Dorsolateral prefrontal cortex (tissue), 120 donors: ENCODE measurements at regions of chr4 and their contacts with region 1.

Region 1: DNA sequence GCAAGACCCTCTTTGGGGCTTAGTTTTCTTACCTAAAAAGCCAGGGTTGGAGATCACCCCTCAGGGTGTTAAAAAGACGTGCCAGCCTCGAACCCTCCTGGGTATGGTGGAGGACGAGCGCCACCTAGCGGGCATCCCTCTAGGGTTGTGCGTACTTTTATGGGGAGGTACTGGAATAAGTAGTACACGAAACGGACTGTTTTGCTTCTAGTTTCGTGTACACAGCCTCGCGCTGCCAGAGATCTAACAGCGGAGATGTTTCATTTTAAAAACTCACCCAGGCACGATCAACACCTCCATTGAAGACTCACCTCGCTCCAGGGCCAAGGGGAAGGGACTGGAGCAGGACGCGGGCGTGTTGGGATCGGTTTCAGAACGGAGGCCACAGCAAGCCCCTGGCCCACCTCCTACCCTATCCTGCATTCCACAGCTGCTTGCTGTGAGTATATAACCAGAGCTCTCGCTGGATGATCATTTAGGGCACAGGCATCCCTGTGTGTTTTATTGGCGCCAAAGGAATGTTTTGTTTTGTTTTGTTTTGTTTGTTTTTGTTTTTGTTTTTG is 4.8 kb upstream of the NKX3-2 start:
- DNase-seq: peak in 7 of 10 donors; percentile 44 to 80 (median 71)
- H3K4me3 ChIP-seq: peak overlapping the region in 36 of 59 donors; percentile 1 to 57 (median 34)
- H3K27ac ChIP-seq: no peak overlapping the region
- H3K27me3 ChIP-seq: peaks cover 22 to 84% (median 67%) of the 10 kb centered on the region in 45 donors
- CTCF ChIP-seq: peak; percentile 58 to 96 (median 85)

Region 2: DNA sequence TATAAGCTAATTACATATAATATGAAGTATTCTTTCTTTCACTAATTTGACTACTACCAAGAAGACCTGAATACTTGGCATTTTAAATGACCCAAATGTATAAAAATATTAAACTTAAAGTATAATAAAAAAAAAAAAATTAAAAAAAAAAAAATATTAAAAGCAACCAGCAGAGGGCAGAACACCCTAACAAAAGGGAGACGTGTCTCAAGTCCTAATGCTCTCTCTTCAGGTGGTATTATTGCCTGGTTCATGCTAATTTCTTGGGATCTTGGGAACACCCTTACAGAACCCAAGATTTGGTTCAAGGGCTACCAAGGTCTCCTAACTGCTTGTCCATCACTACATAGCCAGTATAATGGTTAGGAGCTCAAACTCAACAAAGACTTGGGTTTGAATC is 819.7 kb before region 1 on chr4:
- intact Hi-C with region 1: loop called (anchors 2 to 10 kb)
- DNase-seq: no peak
- H3K4me3 ChIP-seq: no peak overlapping the region
- H3K27ac ChIP-seq: no peak overlapping the region
- H3K27me3 ChIP-seq: peaks cover 0 to 17% (median 0%) of the 10 kb centered on the region in 45 donors
- CTCF ChIP-seq: peak in 55 of 56 donors; percentile 34 to 78 (median 54)

Region 3: DNA sequence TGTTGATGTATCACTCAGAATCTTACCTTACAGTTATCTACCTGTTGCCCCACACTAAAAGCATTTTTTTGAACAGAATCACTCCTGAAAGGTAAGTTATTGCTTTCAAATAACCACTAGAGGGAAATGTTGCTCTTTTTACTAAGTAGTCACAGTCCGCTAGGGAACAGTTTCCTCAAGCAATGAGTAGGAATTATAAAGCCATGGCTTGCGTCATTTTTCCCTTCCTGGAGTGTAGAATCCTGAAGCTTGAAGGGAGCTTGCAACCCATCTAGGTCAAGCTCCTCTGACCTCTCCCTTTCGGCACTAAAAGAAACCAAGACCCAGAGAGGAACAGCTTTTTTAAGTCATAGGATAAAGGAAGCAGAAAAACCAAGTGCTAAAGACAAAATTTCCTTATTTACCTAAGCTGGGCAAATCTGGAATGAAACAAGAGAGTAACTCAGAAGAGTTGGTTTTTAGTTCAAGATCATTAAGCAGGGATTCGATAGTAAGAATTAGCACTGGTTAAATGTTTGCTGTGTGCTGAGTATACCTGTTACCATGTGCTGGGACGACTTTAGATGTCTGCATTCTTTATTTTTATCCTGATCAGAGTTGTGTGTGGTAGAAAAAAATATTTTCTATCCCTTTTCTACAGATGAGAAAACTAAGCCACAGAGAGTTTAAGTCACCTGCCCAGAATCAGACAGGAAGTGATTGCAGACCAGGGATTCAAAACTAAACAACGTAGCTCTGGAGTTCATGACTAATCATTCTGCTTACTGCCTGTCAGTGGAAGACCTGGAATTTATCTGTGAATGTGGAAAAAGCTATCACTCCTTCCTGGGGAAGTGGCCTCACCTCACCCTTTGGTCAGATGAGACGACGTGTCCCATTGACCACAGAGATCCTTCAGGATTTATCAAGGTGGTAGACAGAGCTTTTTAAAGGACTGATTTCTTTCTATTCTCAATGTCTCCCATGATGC is 696.4 kb before region 1 on chr4:
- intact Hi-C with region 1: loop called (anchors 2 to 5 kb)
- DNase-seq: no peak
- H3K4me3 ChIP-seq: no peak overlapping the region
- H3K27ac ChIP-seq: no peak overlapping the region
- H3K27me3 ChIP-seq: peaks cover 0 to 51% (median 5%) of the 10 kb centered on the region in 45 donors
- CTCF ChIP-seq: peak; percentile 34 to 88 (median 68)

Region 4: GRCh38 chr4:13298655-13299054 is 250.4 kb before region 1 on chr4:
- intact Hi-C with region 1: no loop called
- DNase-seq: no peak
- H3K4me3 ChIP-seq: no peak overlapping the region
- H3K27ac ChIP-seq: no peak overlapping the region
- H3K27me3 ChIP-seq: no peaks in the 10 kb centered on the region
- CTCF ChIP-seq: no peak

Region 5: GRCh38 chr4:13484122-13484748 is 64.8 kb before region 1 on chr4 and contains the start of gene RAB28:
- intact Hi-C with region 1: loop called (anchors 5 kb)
- DNase-seq: peak; percentile 95 to 98 (median 96)
- H3K4me3 ChIP-seq: peak within 1 kb of the TSS; percentile 67 to 99 (median 89)
- H3K27ac ChIP-seq: peak within 1 kb of the TSS; percentile 5 to 99 (median 95)
- H3K27me3 ChIP-seq: peaks cover 0 to 10% (median 0%) of the 10 kb centered on the region in 45 donors
- CTCF ChIP-seq: peak in 14 of 56 donors; percentile 1 to 37 (median 16)
- total RNA-seq, gene RAB28: 19.5 to 38.5 (median 25.8) TPM